ENCODE measurements at regions of chr4 and their contacts with region 1.

Region 1: DNA sequence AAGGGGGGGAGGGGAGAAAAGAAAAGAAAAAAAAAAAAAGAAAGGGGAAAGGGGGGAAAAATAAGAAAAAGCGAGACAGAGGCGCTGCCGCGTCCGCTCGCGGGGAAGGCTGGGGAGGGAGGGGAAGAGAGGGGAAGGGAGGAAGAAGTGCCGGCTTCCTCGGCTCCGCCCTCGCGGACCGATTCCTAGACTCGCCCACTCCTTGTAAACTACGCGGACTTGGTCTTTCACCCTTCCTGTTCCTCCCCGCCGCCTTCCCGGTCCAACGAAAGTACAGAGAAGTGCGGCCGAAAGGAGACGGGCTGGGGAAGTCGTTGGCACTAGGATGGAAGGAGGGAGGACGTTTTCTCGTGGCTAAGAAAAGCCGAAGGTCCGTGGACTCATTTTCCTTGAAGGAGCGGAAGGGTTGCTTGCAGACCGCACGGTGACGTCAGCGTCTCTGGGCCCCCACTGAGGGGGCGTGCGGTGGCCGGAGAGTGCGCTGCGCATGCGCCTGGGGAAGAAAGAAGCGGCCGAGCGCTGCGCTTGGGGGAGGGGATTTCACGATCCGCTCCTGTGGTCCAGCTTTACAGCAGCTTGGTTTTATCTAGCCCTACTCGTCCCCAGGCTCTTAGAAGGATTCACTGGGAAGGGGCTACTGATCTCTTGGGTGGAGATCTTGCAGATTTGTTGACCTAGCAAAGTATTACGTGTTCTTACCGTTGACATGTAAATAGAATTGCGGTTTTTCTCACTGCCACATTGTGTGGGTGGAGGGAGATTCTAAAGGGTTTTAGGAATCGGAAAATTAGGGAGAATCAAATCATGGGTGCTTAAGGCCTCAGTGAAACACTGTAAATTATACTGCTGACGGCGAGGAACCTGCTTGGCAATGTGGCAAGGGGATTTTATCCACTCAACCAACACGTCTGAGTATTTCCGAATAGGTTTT is at the start of gene CCNI:
- DNase-seq: peak; percentile 97 to 98 (median 97)
- ATAC-seq: peak; percentile 95 to 96 (median 96)
- H3K4me3 ChIP-seq: peak within 1 kb of the TSS; percentile 77 to 99 (median 89)
- H3K27ac ChIP-seq: peak within 1 kb of the TSS; percentile 93 to 100 (median 99)
- H3K4me1 ChIP-seq: peaks cover 3 to 51% (median 33%) of the 10 kb centered on the region in 12 donors
- H3K27me3 ChIP-seq: no peaks in the 10 kb centered on the region
- CTCF ChIP-seq: no peak
- POLR2A ChIP-seq: peak; percentile 57
- total RNA-seq, gene CCNI: 232 to 356 (median 303) TPM

Region 2: GRCh38 chr4:77052352-77052751 is 23.8 kb before region 1 on chr4:
- intact Hi-C with region 1: loop called in 1 of 10 experiments (anchors 2 kb)
- DNase-seq: peak in 2 of 5 donors; percentile 36 to 43
- ATAC-seq: peak in 2 of 4 donors; percentile 36 to 38
- H3K4me3 ChIP-seq: no peak overlapping the region
- H3K27ac ChIP-seq: no peak overlapping the region
- H3K4me1 ChIP-seq: peaks cover 0 to 11% (median 2%) of the 10 kb centered on the region in 12 donors
- H3K27me3 ChIP-seq: no peaks in the 10 kb centered on the region
- CTCF ChIP-seq: peak; percentile 21 to 61 (median 42)
- POLR2A ChIP-seq: no peak

Region 3: GRCh38 chr4:77104791-77105540 is 28.8 kb after region 1 on chr4:
- intact Hi-C with region 1: loop called in 1 of 10 experiments (anchors 1 kb)
- DNase-seq: peak; percentile 63 to 81 (median 71)
- ATAC-seq: peak; percentile 57 to 78 (median 66)
- H3K4me3 ChIP-seq: peak overlapping the region in 1 of 12 donors; percentile 8
- H3K27ac ChIP-seq: peak overlapping the region in 6 of 12 donors; percentile 2 to 49 (median 35)
- H3K4me1 ChIP-seq: peaks cover 0 to 30% (median 16%) of the 10 kb centered on the region in 12 donors
- H3K27me3 ChIP-seq: no peaks in the 10 kb centered on the region
- CTCF ChIP-seq: no peak
- POLR2A ChIP-seq: no peak

Region 4: DNA sequence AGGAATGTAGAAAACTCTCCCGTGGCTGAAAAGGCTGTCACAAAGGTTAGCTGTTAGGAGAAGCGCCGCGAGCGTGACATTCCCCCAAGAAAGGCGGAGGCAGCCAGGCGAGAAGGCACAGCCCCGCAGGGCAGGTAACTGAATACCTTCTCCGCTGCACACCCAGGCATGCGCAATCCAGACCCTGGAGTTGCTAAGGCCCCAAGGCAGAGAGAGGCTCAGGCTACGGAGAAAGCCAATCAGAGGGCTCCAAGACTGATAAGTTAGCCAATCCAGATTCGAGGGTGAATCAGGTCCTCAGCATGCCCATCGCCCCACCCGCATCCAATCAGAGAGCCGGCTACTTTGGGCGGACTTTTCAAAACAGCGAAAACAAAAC is 80.4 kb after region 1 on chr4:
- intact Hi-C with region 1: loop called (anchors 1 to 5 kb)
- DNase-seq: peak; percentile 90 to 96 (median 95)
- ATAC-seq: peak; percentile 98 to 99 (median 98)
- H3K4me3 ChIP-seq: peak overlapping the region; percentile 65 to 97 (median 86)
- H3K27ac ChIP-seq: peak overlapping the region; percentile 80 to 95 (median 91)
- H3K4me1 ChIP-seq: peaks cover 0 to 34% (median 5%) of the 10 kb centered on the region in 12 donors
- H3K27me3 ChIP-seq: no peaks in the 10 kb centered on the region
- CTCF ChIP-seq: no peak
- POLR2A ChIP-seq: no peak

Region 5: DNA sequence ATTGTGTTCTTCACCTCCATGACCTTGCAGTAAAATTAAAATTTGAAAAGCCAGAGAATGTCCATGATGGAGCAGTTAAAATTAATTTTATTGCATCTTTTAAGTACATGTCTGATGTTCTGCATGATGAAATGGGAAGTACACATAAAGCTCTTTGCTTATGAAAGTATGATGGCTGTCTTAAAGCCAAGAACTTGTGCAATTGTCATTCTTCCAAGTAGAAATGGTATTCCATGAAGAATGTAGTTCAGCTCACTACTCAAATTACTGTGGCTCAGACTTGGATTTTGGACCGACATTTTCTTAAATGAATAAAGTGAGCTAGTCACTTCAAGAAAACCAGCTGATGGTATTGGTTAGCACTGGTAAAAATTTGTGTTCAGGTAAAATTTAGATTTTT is 367.8 kb after region 1 on chr4:
- intact Hi-C with region 1: no loop called
- DNase-seq: no peak
- ATAC-seq: no peak
- H3K4me3 ChIP-seq: no peak overlapping the region
- H3K27ac ChIP-seq: no peak overlapping the region
- H3K4me1 ChIP-seq: no peaks in the 10 kb centered on the region
- H3K27me3 ChIP-seq: no peaks in the 10 kb centered on the region
- CTCF ChIP-seq: no peak
- POLR2A ChIP-seq: no peak

Measured in heart left ventricle (tissue), 16 donors.